Colonic mucosa (tissue), 4 donors: ENCODE measurements at regions of chr4 and their contacts with region 1.

Region 1: GRCh38 chr4:23680671-23681518 is 209.0 kb downstream of the PPARGC1A start:
- DNase-seq: no peak
- H3K4me3 ChIP-seq: no peak overlapping the region
- H3K27ac ChIP-seq: no peak overlapping the region
- H3K4me1 ChIP-seq: no peaks in the 10 kb centered on the region
- H3K27me3 ChIP-seq: no peaks in the 10 kb centered on the region
- CTCF ChIP-seq: no peak

Region 2: GRCh38 chr4:23438764-23439163 is 242.1 kb before region 1 on chr4:
- intact Hi-C with region 1: no loop called
- DNase-seq: no peak
- H3K4me3 ChIP-seq: no peak overlapping the region
- H3K27ac ChIP-seq: no peak overlapping the region
- H3K4me1 ChIP-seq: no peaks in the 10 kb centered on the region
- H3K27me3 ChIP-seq: no peaks in the 10 kb centered on the region
- CTCF ChIP-seq: no peak

Region 3: GRCh38 chr4:24024605-24025004 is 343.7 kb after region 1 on chr4:
- intact Hi-C with region 1: loop called (anchors 10 kb)
- DNase-seq: no peak
- H3K4me3 ChIP-seq: no peak overlapping the region
- H3K27ac ChIP-seq: no peak overlapping the region
- H3K4me1 ChIP-seq: no peaks in the 10 kb centered on the region
- H3K27me3 ChIP-seq: no peaks in the 10 kb centered on the region
- CTCF ChIP-seq: no peak

Region 4: GRCh38 chr4:24321151-24321550 is 640.3 kb after region 1 on chr4:
- intact Hi-C with region 1: no loop called
- DNase-seq: no peak
- H3K4me3 ChIP-seq: no peak overlapping the region
- H3K27ac ChIP-seq: no peak overlapping the region
- H3K4me1 ChIP-seq: no peaks in the 10 kb centered on the region
- H3K27me3 ChIP-seq: no peaks in the 10 kb centered on the region
- CTCF ChIP-seq: no peak